ENCODE measurements at regions of chr1 and their contacts with region 1.

Region 1: DNA sequence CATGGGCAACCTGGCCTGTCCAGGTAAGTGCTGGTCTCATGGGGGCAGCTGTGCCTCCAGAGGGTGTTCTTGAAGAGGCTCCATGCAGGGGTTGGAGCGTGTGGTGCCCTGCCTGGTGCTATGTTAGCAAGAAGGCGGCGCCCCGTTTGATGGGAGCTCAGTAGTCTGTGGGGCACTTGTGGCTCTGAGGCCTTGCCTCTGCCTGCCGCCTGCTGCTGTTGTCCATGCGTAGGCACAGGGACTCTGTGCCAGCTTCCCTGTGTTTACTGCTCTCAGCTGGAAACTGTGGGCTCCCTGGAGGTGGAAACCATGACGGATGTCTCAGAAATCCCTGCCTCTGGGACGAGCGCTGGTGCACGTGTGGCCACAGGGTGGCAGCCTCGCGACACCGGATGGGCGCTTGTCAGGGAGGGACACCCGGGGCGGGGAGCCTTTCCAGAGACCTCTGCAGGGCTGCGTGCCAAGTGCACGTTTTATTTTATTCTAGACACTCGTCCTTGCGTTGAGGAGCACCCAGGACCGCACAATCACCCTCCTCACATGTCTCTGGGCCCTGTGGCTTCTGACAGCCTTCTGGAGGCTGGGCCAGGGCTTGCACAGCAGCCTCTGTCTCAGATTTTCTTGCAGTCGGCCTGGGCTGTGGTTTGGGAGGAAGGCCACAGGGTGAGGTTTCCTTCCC is 27.1 kb downstream of the SNAP47 start:
- DNase-seq: no peak
- H3K4me3 ChIP-seq: no peak overlapping the region
- H3K27ac ChIP-seq: peak overlapping the region; percentile 11
- H3K27me3 ChIP-seq: no peaks in the 10 kb centered on the region
- CTCF ChIP-seq: peak; percentile 77

Region 2: DNA sequence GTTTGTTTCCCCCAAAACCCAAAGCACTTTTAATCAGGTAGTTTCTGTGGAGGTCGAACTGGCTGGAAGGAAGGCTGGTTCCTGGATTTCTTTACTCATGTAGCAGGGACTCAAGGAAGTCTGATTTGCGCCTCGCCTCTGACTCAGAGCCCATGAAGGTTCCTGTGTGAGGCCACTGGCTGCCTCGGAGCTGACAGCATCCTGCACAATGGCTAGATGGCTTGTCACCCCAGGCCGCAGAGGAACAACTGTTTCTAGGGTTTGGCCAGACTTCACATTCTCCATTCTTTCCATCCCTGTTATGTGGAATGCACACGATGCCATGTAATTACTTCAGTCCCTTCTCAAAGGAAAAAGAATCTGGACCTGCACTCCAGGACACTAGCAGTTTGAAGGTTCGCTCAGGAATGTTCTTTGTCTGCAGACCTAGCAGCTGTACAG is 14.0 kb after region 1 on chr1:
- CTCF ChIA-PET with region 1: interaction called, 17 read pairs
- POLR2A ChIA-PET with region 1: interaction called, 5 read pairs
- DNase-seq: no peak
- H3K4me3 ChIP-seq: no peak overlapping the region
- H3K27ac ChIP-seq: peak overlapping the region; percentile 57
- H3K27me3 ChIP-seq: no peaks in the 10 kb centered on the region
- CTCF ChIP-seq: no peak

Region 3: GRCh38 chr1:227952374-227953021 is 190.1 kb after region 1 on chr1:
- CTCF ChIA-PET with region 1: interaction called, 33 read pairs
- POLR2A ChIA-PET with region 1: no interaction called
- DNase-seq: no peak
- H3K4me3 ChIP-seq: no peak overlapping the region
- H3K27ac ChIP-seq: no peak overlapping the region
- H3K27me3 ChIP-seq: peaks cover 7% of the 10 kb centered on the region
- CTCF ChIP-seq: no peak